ENCODE measurements at regions of chr3 and their contacts with region 1.

Region 1: DNA sequence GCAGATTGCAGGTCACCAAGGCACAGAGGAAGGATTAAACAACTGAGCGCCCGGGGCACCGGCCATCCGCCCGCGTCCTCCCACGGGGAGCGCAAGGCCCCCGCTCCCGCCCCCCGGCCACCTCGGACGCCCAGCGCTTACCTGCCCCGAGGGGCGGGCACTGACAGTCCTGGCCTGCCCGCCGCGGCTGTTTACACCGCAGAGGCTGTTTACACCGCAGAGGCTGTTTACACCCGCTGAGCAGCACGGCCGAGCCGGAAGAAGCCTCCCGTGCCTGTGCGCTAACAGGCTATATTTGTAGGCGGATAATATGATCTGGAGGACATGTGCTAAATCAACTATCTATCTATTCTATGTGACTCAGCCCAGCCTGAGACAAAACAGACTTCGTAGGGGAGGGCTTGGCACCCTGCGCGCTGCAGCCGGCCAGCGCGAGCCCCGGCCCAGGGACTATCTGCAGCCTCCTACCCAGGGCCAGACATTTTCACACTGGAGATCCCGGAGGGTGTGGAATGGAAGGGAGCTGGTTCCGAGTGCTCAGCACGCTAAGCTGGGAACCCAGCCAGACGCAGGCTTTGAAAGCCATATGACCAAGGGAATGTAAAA is at the start of gene LRRC2:
- DNase-seq: peak; percentile 61 to 94
- ATAC-seq: peak; percentile 80 to 92 (median 89)
- H3K4me3 ChIP-seq: peak within 1 kb of the TSS; percentile 70
- H3K27ac ChIP-seq: peak within 1 kb of the TSS; percentile 94
- H3K4me1 ChIP-seq: peaks cover 24% of the 10 kb centered on the region
- H3K27me3 ChIP-seq: no peaks in the 10 kb centered on the region
- CTCF ChIP-seq: no peak
- total RNA-seq, gene LRRC2: 65.1 to 160 (median 95.6) TPM

Region 2: GRCh38 chr3:46629551-46630517 is 63.7 kb after region 1 on chr3:
- intact Hi-C with region 1: loop called (anchors 5 kb)
- DNase-seq: peak; percentile 82 to 93
- ATAC-seq: peak; percentile 95 to 97 (median 96)
- H3K4me3 ChIP-seq: peak overlapping the region; percentile 57
- H3K27ac ChIP-seq: peak overlapping the region; percentile 86
- H3K4me1 ChIP-seq: peaks cover 12% of the 10 kb centered on the region
- H3K27me3 ChIP-seq: no peaks in the 10 kb centered on the region
- CTCF ChIP-seq: peak; percentile 99

Measured in psoas muscle (tissue), 8 donors.